CD4-positive, alpha-beta T cell (primary cell): ENCODE measurements at regions of chr3 and their contacts with region 1.

Region 1: DNA sequence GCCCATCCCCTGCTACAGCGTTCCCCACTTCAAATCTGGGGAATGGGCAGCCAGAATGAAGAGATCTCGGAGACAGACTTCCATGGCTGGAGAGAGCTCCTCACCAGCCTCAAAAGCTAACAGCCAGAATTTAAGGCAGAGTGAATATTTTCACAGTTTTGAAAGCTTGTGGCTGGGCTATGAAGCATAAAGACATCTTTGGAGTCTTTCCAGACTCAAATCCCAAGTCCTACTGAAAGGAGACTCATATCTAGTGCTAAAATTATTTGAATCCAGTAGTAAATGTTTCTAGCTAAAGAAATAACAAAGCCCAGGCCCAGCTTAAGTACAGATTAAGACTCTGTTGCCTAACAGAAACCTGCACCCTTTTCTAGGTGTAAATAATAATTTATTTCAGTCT is 628.4 kb upstream of the ALCAM start:
- DNase-seq: no peak
- ATAC-seq: no peak
- H3K4me3 ChIP-seq: no peak overlapping the region
- H3K4me3 Mint-ChIP-seq: no peak overlapping the region
- H3K27ac ChIP-seq: no peak overlapping the region
- H3K27ac Mint-ChIP-seq: no peak overlapping the region
- H3K4me1 ChIP-seq: no peaks in the 10 kb centered on the region
- H3K4me1 Mint-ChIP-seq: no peaks in the 10 kb centered on the region
- H3K27me3 ChIP-seq: no peaks in the 10 kb centered on the region
- H3K27me3 Mint-ChIP-seq: no peaks in the 10 kb centered on the region
- CTCF ChIP-seq: no peak

Region 2: GRCh38 chr3:103889675-103890074 is 848.6 kb before region 1 on chr3:
- CTCF ChIA-PET with region 1: no interaction called
- POLR2A ChIA-PET with region 1: no interaction called
- intact Hi-C with region 1: loop called in 1 of 2 experiments (anchors 5 kb)
- DNase-seq: no peak
- ATAC-seq: no peak
- H3K4me3 ChIP-seq: no peak overlapping the region
- H3K4me3 Mint-ChIP-seq: no peak overlapping the region
- H3K27ac ChIP-seq: no peak overlapping the region
- H3K27ac Mint-ChIP-seq: no peak overlapping the region
- H3K4me1 ChIP-seq: no peaks in the 10 kb centered on the region
- H3K4me1 Mint-ChIP-seq: no peaks in the 10 kb centered on the region
- H3K27me3 ChIP-seq: no peaks in the 10 kb centered on the region
- H3K27me3 Mint-ChIP-seq: no peaks in the 10 kb centered on the region
- CTCF ChIP-seq: no peak